ENCODE measurements at regions of chr16 and their contacts with region 1.

Region 1: GRCh38 chr16:11407047-11407982 is 62.1 kb downstream of the RMI2 start:
- DNase-seq: peak in 1 of 2 experiments; percentile 88
- H3K4me3 ChIP-seq: no peak overlapping the region
- H3K27ac ChIP-seq: no peak overlapping the region
- H3K4me1 ChIP-seq: no peaks in the 10 kb centered on the region; a peak in 2 of 7 replicates
- H3K27me3 ChIP-seq: no peaks in the 10 kb centered on the region
- CTCF ChIP-seq: peak; percentile 39 to 83 (median 73)
- EP300 ChIP-seq: no peak
- POLR2A ChIP-seq: no peak
- RAD21 ChIP-seq: peak; percentile 80 to 86

Region 2: DNA sequence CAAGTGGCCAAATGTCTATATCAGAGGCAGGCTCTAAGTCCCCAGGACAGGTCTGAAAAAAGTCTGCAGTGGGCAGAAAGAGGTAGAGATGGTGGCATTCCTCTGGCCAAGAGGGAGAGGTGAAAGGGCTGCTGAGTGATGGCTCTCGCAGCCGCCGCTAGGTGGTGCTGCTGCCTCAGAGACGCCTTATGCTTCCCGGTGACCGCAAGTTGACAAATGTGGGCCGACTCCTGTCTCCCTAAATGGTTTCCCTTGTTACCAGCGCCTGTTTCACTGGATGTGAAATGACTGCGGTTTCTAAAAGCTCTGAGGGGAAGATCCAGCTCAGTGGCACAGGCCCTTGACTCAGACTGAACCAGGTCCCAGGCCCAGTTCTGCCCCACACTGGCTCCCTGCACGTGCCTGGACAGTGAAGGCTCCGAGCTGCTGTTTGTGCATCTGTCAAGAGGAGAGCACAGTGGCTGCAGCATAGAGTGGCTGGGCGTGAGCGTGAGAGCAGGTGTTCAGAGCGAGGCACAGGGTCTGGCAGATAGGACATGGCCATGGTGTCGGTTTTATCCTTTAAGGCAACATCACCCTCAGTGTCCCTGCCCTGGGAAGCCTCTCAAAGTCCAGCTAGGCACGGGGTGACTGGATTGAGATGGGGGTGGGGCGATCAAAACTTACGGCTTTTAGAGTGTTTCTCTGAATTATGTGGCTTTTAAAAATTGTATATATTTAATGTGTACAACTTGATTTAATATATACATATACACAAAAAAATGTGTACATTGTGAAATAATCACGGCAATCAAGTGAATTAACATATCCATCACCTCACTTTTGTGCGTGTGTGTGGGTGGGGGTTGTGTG is 443.1 kb before region 1 on chr16:
- CTCF ChIA-PET with region 1: interaction called, 15 read pairs
- POLR2A ChIA-PET with region 1: no interaction called
- DNase-seq: peak in 1 of 2 experiments; percentile 89
- H3K4me3 ChIP-seq: no peak overlapping the region
- H3K27ac ChIP-seq: no peak overlapping the region
- H3K4me1 ChIP-seq: peaks cover 0 to 4% (median 2%) of the 10 kb centered on the region in 4 experiments; a peak in 4 of 7 replicates
- H3K27me3 ChIP-seq: no peaks in the 10 kb centered on the region
- CTCF ChIP-seq: peak; percentile 86 to 98 (median 98)
- EP300 ChIP-seq: no peak
- POLR2A ChIP-seq: no peak
- RAD21 ChIP-seq: peak; percentile 92 to 94

Region 3: DNA sequence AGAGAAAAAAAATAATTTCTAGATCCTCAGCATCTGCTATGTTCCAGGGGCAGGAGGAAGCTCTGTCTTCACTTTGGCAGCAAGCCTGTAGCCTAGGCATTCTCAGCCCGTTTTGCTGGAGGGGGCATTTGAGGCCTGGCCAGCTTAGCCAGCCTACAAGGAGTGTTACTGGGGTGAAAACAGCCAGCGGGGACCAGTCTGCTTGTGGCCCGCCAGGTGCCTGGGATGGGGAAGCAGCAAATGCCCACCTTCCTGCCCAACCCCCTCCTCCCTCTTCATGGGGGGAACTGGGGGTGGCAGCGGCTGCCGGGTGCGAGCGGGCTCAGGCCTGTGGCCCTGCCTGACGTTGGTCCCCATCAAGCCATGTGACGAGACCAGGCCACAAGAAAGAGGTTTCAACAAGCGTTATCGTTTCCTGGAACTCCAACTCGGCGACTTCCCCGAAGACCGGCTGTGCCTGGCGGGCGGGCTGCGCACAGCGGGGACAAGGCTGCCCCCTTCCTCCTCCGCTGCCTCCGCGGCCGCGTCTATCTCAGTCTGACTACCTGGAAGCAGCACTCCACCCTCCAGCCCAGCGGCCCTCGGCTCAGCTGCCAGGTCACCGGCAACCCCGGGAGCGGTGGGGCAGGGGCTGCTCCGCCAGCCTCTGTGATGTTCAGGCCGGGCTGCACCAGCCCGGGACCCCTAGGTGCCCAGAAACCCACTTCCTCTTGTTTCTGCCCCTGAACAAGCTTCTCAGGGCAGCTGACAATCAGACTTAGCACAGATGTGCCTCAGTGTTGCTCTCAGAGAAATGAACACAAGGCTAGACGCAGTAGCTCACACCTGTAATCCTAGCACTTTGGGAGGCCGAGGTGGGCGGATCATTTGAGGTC is 174.2 kb before region 1 on chr16:
- CTCF ChIA-PET with region 1: no interaction called
- POLR2A ChIA-PET with region 1: no interaction called
- DNase-seq: peak in 1 of 2 experiments; percentile 69
- H3K4me3 ChIP-seq: peak overlapping the region in 1 of 4 experiments; percentile 27; a peak in 1 of 8 replicates
- H3K27ac ChIP-seq: no peak overlapping the region
- H3K4me1 ChIP-seq: peaks cover 0 to 4% (median 1%) of the 10 kb centered on the region in 4 experiments; a peak in 3 of 7 replicates
- H3K27me3 ChIP-seq: no peaks in the 10 kb centered on the region
- CTCF ChIP-seq: no peak
- EP300 ChIP-seq: no peak
- POLR2A ChIP-seq: no peak
- RAD21 ChIP-seq: no peak

Region 4: GRCh38 chr16:11312718-11313492 is 94.4 kb before region 1 on chr16:
- CTCF ChIA-PET with region 1: no interaction called
- POLR2A ChIA-PET with region 1: no interaction called
- DNase-seq: no peak
- H3K4me3 ChIP-seq: peak overlapping the region in 1 of 4 experiments; percentile 2; a peak in 1 of 8 replicates
- H3K27ac ChIP-seq: peak overlapping the region; percentile 61; the same call in 1 of the 2 replicates
- H3K4me1 ChIP-seq: peaks cover 26 to 45% (median 26%) of the 10 kb centered on the region in 4 experiments
- H3K27me3 ChIP-seq: no peaks in the 10 kb centered on the region
- CTCF ChIP-seq: no peak
- EP300 ChIP-seq: peak in 1 of 2 experiments; percentile 6; a peak in 1 of 3 replicates
- POLR2A ChIP-seq: no peak
- RAD21 ChIP-seq: no peak

Region 5: GRCh38 chr16:11340710-11341109 is 66.6 kb before region 1 on chr16:
- CTCF ChIA-PET with region 1: no interaction called
- POLR2A ChIA-PET with region 1: no interaction called
- DNase-seq: no peak
- H3K4me3 ChIP-seq: no peak overlapping the region
- H3K27ac ChIP-seq: no peak overlapping the region
- H3K4me1 ChIP-seq: peaks cover 0 to 10% (median 4%) of the 10 kb centered on the region in 4 experiments; a peak in 4 of 7 replicates
- H3K27me3 ChIP-seq: no peaks in the 10 kb centered on the region
- CTCF ChIP-seq: no peak
- EP300 ChIP-seq: no peak
- POLR2A ChIP-seq: no peak
- RAD21 ChIP-seq: no peak

Region 6: GRCh38 chr16:11386791-11387546 is 20.3 kb before region 1 on chr16:
- CTCF ChIA-PET with region 1: interaction called, 266 read pairs
- POLR2A ChIA-PET with region 1: interaction called, 5 read pairs
- DNase-seq: peak; percentile 41 to 92
- H3K4me3 ChIP-seq: no peak overlapping the region
- H3K27ac ChIP-seq: no peak overlapping the region
- H3K4me1 ChIP-seq: peaks cover 0 to 29% (median 14%) of the 10 kb centered on the region in 4 experiments; a peak in 5 of 7 replicates
- H3K27me3 ChIP-seq: no peaks in the 10 kb centered on the region
- CTCF ChIP-seq: peak; percentile 86 to 88 (median 86)
- EP300 ChIP-seq: no peak
- POLR2A ChIP-seq: no peak
- RAD21 ChIP-seq: peak; percentile 64 to 76

Region 7: GRCh38 chr16:11417487-11417886 is 10.2 kb after region 1 on chr16:
- CTCF ChIA-PET with region 1: interaction called, 48 read pairs
- POLR2A ChIA-PET with region 1: interaction called, 3 read pairs
- DNase-seq: no peak
- H3K4me3 ChIP-seq: no peak overlapping the region
- H3K27ac ChIP-seq: no peak overlapping the region
- H3K4me1 ChIP-seq: peaks cover 0 to 5% (median 0%) of the 10 kb centered on the region in 4 experiments; a peak in 2 of 7 replicates
- H3K27me3 ChIP-seq: no peaks in the 10 kb centered on the region
- CTCF ChIP-seq: no peak
- EP300 ChIP-seq: no peak
- POLR2A ChIP-seq: no peak
- RAD21 ChIP-seq: no peak

Region 8: DNA sequence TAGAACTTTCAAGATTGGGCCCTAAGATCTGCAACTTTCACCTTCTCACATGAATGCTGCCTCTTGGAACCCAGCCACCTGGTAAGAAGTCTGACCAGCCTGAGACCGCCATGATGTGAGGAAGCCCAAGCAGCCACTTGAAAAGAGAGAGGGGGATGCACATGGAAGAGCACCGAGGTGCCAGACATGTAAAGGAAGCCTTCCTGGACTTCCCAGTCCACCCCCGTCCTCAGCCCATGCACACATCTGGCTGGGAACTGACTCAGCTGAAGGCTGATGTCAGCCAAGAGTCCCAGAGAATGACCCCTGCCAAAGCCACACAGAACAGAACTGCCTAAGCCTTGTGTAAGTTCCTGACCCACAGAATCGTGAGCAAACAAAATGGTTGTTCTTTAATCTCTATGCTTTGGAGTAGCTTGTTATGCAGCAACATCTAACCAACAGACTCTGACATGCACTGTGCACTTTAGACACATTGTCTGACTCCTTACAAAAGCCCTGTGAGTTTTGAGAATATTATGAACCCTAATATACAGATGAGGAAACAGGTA is 24.7 kb after region 1 on chr16:
- CTCF ChIA-PET with region 1: interaction called, 23 read pairs
- POLR2A ChIA-PET with region 1: interaction called, 3 read pairs
- DNase-seq: no peak
- H3K4me3 ChIP-seq: no peak overlapping the region
- H3K27ac ChIP-seq: no peak overlapping the region
- H3K4me1 ChIP-seq: no peaks in the 10 kb centered on the region; a peak in 1 of 7 replicates
- H3K27me3 ChIP-seq: no peaks in the 10 kb centered on the region
- CTCF ChIP-seq: no peak
- EP300 ChIP-seq: no peak
- POLR2A ChIP-seq: no peak
- RAD21 ChIP-seq: no peak

Region 9: DNA sequence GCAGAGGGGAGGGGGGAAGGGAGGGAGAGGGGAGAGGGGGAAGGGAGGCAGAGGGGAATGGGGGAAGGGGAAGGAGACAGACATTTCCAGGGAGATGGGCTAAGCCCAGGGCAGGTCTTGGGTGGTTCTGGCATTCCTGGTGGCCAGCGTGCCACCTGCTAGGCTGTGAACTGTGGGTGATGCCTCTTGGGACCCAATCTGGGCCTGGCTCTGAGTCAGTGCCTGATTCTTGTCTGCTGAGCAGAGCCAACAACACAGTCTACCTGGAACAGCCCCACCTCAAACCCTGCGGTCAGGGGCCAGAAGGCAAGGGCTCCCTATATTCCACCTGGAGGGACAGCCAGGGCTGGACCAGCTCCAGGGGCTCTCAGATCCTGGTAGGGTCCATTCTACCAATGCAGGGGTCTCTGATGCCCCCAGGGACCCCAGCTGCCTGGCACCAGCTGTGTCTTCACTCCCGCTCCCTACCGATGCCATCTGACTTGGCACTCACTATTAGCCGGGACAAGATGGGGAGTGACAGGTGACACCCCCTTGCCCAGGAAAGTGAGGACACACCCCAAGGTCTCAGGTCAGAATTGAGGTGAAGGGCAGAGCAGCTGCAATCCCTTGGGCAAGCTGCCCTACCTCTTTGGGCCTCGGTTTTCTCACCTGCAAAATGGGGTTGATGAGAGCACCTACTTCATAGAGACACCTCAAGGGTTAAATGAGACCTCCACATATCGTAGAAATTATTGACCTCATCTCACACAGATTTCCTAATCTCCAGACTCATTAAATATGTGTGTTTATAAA is 92.2 kb after region 1 on chr16:
- CTCF ChIA-PET with region 1: interaction called, 23 read pairs
- POLR2A ChIA-PET with region 1: no interaction called
- DNase-seq: peak in 1 of 2 experiments; percentile 52
- H3K4me3 ChIP-seq: no peak overlapping the region
- H3K27ac ChIP-seq: no peak overlapping the region
- H3K4me1 ChIP-seq: peaks cover 2 to 40% (median 29%) of the 10 kb centered on the region in 4 experiments
- H3K27me3 ChIP-seq: no peaks in the 10 kb centered on the region
- CTCF ChIP-seq: no peak
- EP300 ChIP-seq: no peak
- POLR2A ChIP-seq: no peak
- RAD21 ChIP-seq: no peak

Region 10: DNA sequence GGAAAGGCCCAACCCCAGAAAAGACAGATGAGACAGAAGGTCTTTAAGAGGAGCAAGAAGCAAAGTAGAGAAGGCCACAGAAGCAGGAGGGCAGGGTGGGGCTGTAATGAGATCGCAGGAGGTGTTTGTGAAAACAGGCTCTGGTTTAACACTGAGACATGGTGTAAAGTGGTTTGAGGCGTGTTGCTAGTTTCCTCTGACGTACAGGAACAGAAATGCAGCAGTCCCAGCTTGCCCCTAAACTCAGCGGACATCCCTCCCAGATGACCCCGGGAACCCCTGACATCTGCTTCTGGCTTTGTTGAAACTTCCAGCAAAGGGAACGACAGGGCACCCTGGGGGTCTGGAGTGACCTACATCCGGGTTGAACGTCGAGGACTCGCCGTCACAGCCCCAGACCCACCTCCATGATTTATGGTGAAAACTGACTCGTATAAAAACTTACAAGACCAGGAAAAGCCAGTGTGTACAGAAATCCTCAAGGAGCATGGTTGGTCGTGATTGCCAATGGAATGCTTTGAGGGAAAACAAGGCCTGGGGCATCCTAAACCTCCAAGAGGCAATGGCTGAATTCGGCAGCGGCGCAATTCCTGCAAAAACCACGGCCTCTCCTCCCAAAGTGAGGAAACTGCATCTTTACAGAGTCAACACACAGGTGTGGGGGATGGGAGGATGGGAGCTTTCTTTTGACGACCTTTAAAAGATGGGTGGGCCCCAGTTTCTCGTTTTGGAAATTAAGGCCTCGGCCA is 153.6 kb after region 1 on chr16:
- CTCF ChIA-PET with region 1: no interaction called
- POLR2A ChIA-PET with region 1: no interaction called
- DNase-seq: peak in 1 of 2 experiments; percentile 56
- H3K4me3 ChIP-seq: no peak overlapping the region
- H3K27ac ChIP-seq: peak overlapping the region; percentile 27; the same call in 1 of the 2 replicates
- H3K4me1 ChIP-seq: peaks cover 3 to 14% (median 6%) of the 10 kb centered on the region in 4 experiments
- H3K27me3 ChIP-seq: no peaks in the 10 kb centered on the region
- CTCF ChIP-seq: no peak
- EP300 ChIP-seq: no peak
- POLR2A ChIP-seq: no peak
- RAD21 ChIP-seq: no peak

Region 11: DNA sequence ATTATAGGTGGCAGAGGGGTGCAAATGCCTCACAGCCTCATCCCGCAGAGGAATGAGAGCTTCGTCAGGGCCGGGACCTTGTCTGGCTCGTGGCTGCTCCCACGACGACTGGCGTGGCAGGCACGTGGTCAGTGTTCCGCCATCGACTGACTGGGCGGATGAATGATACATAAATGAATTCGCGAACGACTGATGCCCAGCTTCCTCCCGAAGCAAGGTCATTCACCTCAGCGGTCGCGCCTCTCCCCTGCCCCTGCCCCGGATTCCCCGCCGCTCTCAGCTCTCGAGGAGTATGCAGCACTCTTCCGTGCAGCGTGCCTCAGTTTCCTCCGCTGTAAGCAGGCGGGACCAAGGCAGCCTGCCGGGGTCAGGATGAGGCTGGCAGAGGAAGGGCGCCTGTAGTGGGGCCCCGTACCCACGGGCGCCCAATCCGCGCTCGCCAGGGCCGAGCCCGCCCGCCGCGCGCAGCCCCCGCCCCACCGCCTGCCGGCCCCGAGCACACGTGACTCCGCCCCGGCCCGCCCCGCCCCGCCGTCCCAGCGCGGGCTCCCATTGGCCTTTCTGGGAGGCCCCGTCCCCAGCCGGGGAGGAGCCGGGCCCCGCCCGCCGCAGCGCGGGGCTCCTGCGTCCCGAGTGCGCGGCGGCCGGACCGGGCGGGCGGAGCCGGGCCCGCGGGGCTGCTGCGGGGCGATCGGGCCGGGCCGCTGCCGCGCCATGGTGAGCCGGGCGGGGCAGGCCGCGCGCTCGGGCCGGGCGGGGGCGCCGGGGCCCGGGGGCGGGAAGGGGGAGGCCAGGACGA is 260.7 kb after region 1 on chr16 and contains the start of gene SNN:
- CTCF ChIA-PET with region 1: interaction called, 19 read pairs
- POLR2A ChIA-PET with region 1: interaction called, 3 read pairs
- DNase-seq: peak in 1 of 2 experiments; percentile 86
- H3K4me3 ChIP-seq: peak within 1 kb of the TSS; percentile 67 to 78 (median 71)
- H3K27ac ChIP-seq: no peak within 1 kb of the TSS
- H3K4me1 ChIP-seq: peaks cover 5 to 38% (median 28%) of the 10 kb centered on the region in 4 experiments
- H3K27me3 ChIP-seq: peaks cover 0 to 4% (median 0%) of the 10 kb centered on the region in 4 experiments; a peak in 1 of 7 replicates
- CTCF ChIP-seq: no peak
- EP300 ChIP-seq: no peak
- POLR2A ChIP-seq: peak in 1 of 2 experiments; percentile 53; a peak in 1 of 3 replicates
- RAD21 ChIP-seq: no peak
- total RNA-seq, gene SNN: 60.6 and 66.9 TPM in 2 replicates

Measured in H1 (cell line).